MCF 10A (cell line): ENCODE measurements at regions of chr3 and their contacts with region 1.

Region 1: DNA sequence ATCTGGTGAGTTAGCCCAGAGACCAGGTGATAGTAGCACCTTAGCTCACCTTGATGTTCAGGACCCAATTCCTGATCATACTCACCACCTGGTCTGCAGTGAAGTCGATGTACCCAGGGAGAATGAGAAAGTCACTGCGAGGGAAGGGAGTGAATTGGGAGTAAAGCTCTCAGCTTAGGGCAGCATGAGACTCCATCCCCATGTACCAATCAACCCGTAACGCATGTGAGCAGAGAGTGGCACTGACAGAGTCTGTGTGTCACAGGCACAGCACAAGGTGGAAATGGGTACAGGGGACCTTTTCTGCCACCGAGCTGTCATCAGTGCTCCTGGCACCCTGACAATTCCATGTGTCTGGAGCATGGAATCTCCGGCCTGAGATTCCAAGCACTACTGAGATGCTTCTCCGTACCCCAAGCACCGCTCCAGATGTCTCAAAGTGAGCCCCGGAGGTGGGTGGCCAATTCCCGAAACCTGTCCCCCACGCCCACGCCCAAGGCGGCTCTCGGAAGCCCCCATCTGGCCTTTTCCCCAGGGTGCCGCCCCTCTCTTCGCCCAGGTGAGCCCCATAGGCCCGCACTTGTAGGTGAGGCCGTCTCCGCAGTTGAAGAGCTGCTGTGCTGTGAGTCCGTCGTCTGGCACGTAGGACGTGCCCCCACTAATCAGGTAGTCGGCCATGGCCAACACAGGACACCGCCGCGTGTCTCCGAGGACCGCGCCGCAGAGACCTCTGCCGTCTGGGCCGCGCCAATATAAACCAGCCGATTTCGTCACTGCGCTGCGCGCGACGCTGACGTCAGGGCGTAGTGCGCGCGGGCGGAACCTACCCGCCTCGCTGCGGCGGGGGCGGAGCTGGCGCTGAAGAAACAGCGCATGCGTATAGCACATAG is at the start of gene IMPDH2:
- DNase-seq: peak; percentile 90
- H3K4me3 Mint-ChIP-seq: peak within 1 kb of the TSS; percentile 95
- H3K27ac Mint-ChIP-seq: peak within 1 kb of the TSS; percentile 99
- H3K4me1 Mint-ChIP-seq: peaks cover 40% of the 10 kb centered on the region
- H3K27me3 Mint-ChIP-seq: no peaks in the 10 kb centered on the region
- CTCF ChIP-seq: no peak
- total RNA-seq, gene IMPDH2: 317 and 476 TPM in 2 replicates

Region 2: DNA sequence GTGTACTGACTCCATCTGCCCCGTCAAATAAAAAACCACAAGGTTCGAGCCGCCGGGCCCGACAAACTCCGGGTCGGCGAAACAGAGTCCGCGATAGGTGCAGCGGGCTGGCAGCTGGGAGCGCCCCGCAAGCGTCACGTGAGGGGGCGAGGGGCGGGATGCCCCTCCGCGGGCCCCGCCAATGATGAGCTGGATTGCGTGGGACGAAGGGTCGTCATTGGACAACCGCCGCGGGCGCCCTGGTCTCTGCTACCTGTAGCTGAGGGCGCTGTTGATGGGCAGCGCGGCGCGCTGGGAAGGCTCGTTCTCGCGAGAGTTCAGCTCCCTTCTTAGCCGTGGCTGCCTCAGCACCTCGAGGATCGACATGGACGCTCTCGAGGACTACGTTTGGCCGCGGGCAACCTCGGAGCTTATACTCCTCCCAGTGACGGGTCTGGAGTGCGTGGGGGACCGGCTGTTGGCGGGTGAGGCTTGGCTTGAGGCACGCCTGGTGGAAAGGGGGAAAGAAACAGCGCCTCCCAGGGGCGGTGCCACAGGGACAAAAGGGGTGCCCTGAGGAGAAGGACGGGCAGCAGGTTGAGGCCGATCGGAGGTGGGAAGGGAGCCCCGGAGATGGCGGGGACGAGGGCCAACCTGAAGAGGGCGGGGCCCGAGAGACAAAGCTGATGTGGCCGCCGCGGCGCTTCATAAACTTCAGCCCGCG is 21.7 kb before region 1 on chr3 and contains the start of gene WDR6:
- CTCF ChIA-PET with region 1: interaction called, 3 read pairs
- POLR2A ChIA-PET with region 1: interaction called, 251 read pairs
- intact Hi-C with region 1: no loop called
- DNase-seq: peak; percentile 98
- H3K4me3 Mint-ChIP-seq: peak within 1 kb of the TSS; percentile 99
- H3K27ac Mint-ChIP-seq: peak within 1 kb of the TSS; percentile 99
- H3K4me1 Mint-ChIP-seq: peaks cover 10% of the 10 kb centered on the region
- H3K27me3 Mint-ChIP-seq: no peaks in the 10 kb centered on the region
- CTCF ChIP-seq: peak; percentile 33
- total RNA-seq, gene WDR6: 112 and 116 TPM in 2 replicates

Region 3: GRCh38 chr3:49104483-49105291 is 75.8 kb after region 1 on chr3 and contains the start of gene QARS1:
- CTCF ChIA-PET with region 1: no interaction called
- POLR2A ChIA-PET with region 1: interaction called, 11 read pairs
- intact Hi-C with region 1: no loop called
- DNase-seq: peak; percentile 93
- H3K4me3 Mint-ChIP-seq: peak within 1 kb of the TSS; percentile 98
- H3K27ac Mint-ChIP-seq: peak within 1 kb of the TSS; percentile 90
- H3K4me1 Mint-ChIP-seq: peaks cover 12% of the 10 kb centered on the region
- H3K27me3 Mint-ChIP-seq: no peaks in the 10 kb centered on the region
- CTCF ChIP-seq: no peak
- total RNA-seq, gene QARS1: 114 and 149 TPM in 2 replicates

Region 4: DNA sequence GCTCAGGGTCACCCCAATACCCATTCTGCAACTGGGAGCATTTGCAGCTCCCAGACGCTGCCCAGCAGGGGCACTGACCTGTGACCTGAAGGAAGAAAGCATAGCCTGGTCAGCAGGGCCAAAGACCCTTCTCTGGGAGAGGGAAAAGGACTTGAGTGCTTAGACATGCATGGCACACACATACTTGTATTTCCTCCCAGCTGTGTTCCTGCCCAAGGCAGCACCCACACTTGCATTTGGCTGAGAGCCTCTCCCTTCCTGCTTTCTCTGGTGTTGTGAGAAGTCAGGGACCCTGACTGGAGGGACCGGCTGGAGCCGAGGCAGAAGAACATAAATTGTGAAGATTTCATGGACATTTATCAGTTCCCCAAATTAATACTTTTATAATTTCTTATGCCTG is 111.2 kb after region 1 on chr3:
- CTCF ChIA-PET with region 1: no interaction called
- POLR2A ChIA-PET with region 1: no interaction called
- intact Hi-C with region 1: no loop called
- DNase-seq: no peak
- H3K4me3 Mint-ChIP-seq: no peak overlapping the region
- H3K27ac Mint-ChIP-seq: no peak overlapping the region
- H3K4me1 Mint-ChIP-seq: no peaks in the 10 kb centered on the region
- H3K27me3 Mint-ChIP-seq: no peaks in the 10 kb centered on the region
- CTCF ChIP-seq: no peak

Region 5: DNA sequence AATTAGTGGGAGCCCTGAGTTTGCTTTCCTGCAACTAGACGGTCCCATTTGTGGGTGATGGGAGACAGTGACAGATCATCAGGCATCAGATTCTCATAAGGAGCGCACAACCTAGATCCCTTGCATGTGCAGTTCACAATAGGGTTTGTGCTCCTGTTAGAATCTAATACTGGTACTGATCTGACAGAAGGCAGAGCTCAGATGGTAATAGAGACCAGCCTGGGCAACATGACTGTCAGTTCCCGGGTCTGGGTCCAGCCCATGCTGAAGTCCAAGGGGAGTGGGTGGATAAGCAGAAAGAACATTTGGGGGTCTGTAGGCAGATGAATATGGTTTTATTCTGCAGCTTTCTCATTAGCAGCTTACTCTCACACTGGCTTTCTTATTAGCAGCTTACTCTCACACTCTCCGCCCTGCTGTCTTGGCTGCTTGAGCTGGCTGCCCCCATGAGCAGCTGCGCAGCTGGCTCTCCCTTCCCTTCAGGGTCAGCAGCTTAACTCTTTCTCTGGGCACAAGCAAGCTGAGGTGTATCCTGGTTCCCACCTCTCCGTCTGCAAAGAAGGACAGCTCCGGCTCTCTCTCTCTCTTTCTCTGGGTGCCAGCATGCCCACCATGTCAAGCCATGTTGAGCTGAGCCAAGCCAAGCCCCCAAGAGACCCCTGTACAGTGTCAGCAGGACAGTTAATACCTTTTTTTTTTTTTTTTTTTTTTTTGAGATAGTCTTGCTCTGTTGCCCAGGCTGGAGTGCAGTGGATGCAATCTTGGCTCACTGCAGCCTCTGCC is 189.0 kb after region 1 on chr3:
- CTCF ChIA-PET with region 1: no interaction called
- POLR2A ChIA-PET with region 1: no interaction called
- intact Hi-C with region 1: no loop called
- DNase-seq: no peak
- H3K4me3 Mint-ChIP-seq: no peak overlapping the region
- H3K27ac Mint-ChIP-seq: peak overlapping the region; percentile 67
- H3K4me1 Mint-ChIP-seq: no peaks in the 10 kb centered on the region
- H3K27me3 Mint-ChIP-seq: no peaks in the 10 kb centered on the region
- CTCF ChIP-seq: no peak